ENCODE measurements at regions of chr1 and their contacts with region 1.

Region 1: DNA sequence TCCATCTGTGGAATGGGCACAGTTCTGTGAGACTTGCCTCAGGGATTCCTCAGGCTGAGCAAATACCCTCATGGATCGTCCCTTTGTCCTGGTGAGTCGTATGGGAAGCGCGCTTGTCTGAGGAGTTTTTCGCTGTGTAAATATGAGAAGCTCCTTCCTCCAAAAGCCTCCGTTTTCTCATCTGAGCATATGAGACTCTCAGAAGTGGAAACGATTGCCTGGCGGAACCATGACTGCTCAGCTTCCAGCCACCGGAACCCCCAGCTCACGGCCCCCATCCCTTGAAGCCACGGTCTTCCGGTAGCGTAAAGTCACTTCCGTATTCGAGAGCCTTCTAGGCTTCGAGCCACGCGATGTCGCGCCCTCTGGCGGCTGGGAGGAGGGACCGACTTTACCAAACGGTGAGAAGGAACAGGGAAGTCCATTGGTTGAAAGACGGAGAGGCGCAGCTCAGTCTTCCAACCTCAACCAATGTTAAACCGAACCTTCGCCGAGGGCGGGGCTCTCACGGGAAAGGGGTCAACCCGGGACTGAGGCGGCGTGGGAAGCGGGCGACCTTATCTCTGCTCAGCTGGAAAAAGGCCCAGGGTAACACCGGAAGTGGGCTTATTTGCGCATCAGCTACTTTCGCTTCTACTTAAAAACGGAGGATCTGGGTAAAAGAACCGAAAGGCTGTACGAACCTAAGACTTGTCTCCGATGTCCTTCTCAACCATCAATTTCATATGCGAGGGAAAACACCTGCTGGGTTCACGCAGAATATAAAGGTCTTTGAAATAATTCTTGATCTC is 46.2 kb downstream of the AZIN2 start:
- DNase-seq: peak; percentile 96
- H3K4me3 ChIP-seq: peak overlapping the region; percentile 75
- CTCF ChIP-seq: peak; percentile 94

Region 2: DNA sequence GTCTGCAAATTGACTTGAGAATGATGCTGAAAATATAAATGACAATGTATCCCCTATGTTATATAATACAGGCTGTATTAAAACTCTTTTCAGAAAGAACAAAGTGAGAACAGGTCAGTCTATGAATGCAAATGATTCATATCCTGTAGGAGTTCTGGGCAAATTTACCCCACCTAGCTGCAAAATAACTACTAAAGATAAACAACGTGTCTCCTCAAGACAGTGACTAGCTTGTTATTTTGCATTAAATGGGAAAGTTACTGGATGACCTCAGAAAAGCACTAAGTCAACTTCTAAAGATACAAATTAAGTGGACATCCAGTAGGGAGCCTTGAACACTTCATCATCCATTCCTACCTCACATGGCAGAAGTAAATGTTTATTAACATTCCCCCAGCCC is 173.7 kb before region 1 on chr1:
- CTCF ChIA-PET with region 1: no interaction called
- POLR2A ChIA-PET with region 1: no interaction called
- DNase-seq: no peak
- H3K4me3 ChIP-seq: no peak overlapping the region
- CTCF ChIP-seq: no peak

Region 3: GRCh38 chr1:33111970-33112369 is 15.2 kb before region 1 on chr1:
- CTCF ChIA-PET with region 1: interaction called, 27 read pairs
- POLR2A ChIA-PET with region 1: interaction called, 4 read pairs
- DNase-seq: no peak
- H3K4me3 ChIP-seq: no peak overlapping the region
- CTCF ChIP-seq: peak; percentile 26

Region 4: GRCh38 chr1:33137800-33138199 is 10.6 kb after region 1 on chr1:
- CTCF ChIA-PET with region 1: interaction called, 168 read pairs
- POLR2A ChIA-PET with region 1: interaction called, 4 read pairs
- DNase-seq: no peak
- H3K4me3 ChIP-seq: no peak overlapping the region
- CTCF ChIP-seq: peak; percentile 63